ENCODE measurements at regions of chr9 and their contacts with region 1.

Region 1: GRCh38 chr9:136619742-136620440 is 42.8 kb upstream of the EGFL7 start:
- DNase-seq: peak; percentile 55 to 82
- H3K4me3 ChIP-seq: no peak overlapping the region
- H3K27ac ChIP-seq: no peak overlapping the region
- H3K4me1 ChIP-seq: peaks cover 5 to 16% (median 14%) of the 10 kb centered on the region in 4 donors
- H3K27me3 ChIP-seq: peaks cover 0 to under 1% of the 10 kb centered on the region in 2 donors
- CTCF ChIP-seq: no peak

Region 2: GRCh38 chr9:136539427-136540421 is 80.2 kb before region 1 on chr9:
- intact Hi-C with region 1: loop called (anchors 5 kb)
- DNase-seq: peak; percentile 93 to 94
- H3K4me3 ChIP-seq: peak overlapping the region in 1 of 2 donors; percentile 8
- H3K27ac ChIP-seq: peak overlapping the region; percentile 43 to 51
- H3K4me1 ChIP-seq: peaks cover 0 to 75% (median 54%) of the 10 kb centered on the region in 4 donors
- H3K27me3 ChIP-seq: no peaks in the 10 kb centered on the region
- CTCF ChIP-seq: no peak

Measured in tibial artery (tissue), 4 donors.